Naive thymus-derived CD4-positive, alpha-beta T cell (primary cell): ENCODE measurements at regions of chr6 and their contacts with region 1.

Region 1: DNA sequence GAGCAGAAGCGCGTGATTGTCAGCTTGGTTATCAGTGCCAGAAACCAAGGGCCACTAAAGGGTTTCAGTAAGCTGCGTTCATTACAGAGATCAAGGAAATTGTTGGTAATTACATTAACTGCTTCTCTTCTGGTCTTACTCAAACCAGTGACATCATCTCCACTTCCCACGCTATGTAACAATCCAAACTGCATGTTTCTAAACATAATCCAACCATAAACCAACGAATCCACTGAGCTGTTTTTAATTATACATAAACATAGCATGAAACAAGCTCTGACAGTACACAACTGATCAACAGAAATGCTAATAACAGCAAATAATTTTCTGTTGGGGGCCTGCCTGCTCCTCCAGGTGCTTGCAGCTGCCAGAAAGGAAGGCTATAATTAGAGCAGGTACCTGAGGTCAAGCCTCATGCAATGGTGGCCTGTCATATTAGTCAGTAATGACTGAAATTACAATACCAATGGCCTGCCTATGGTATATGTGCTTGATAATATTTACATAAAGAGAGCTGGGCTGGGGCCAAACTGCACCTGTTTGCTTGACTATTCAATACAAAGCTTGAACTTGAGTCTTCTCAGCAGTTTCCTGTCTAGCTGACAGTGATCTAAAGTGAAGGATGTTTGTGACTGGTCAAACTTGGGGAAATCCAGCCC is 40.1 kb downstream of the ILRUN start:
- DNase-seq: peak in 2 of 9 donors; percentile 15 to 25
- ATAC-seq: peak; percentile 70
- H3K4me3 ChIP-seq: peak overlapping the region; percentile 55
- H3K4me3 Mint-ChIP-seq: peak overlapping the region; percentile 68 to 94 (median 86)
- H3K27ac ChIP-seq: peak overlapping the region; percentile 72
- H3K27ac Mint-ChIP-seq: peak overlapping the region; percentile 84 to 97 (median 93)
- H3K4me1 ChIP-seq: peaks cover 8 to 17% of the 10 kb centered on the region in 2 donors
- H3K4me1 Mint-ChIP-seq: peaks cover 26 to 59% (median 55%) of the 10 kb centered on the region in 7 donors
- H3K27me3 ChIP-seq: no peaks in the 10 kb centered on the region
- H3K27me3 Mint-ChIP-seq: no peaks in the 10 kb centered on the region

Region 2: DNA sequence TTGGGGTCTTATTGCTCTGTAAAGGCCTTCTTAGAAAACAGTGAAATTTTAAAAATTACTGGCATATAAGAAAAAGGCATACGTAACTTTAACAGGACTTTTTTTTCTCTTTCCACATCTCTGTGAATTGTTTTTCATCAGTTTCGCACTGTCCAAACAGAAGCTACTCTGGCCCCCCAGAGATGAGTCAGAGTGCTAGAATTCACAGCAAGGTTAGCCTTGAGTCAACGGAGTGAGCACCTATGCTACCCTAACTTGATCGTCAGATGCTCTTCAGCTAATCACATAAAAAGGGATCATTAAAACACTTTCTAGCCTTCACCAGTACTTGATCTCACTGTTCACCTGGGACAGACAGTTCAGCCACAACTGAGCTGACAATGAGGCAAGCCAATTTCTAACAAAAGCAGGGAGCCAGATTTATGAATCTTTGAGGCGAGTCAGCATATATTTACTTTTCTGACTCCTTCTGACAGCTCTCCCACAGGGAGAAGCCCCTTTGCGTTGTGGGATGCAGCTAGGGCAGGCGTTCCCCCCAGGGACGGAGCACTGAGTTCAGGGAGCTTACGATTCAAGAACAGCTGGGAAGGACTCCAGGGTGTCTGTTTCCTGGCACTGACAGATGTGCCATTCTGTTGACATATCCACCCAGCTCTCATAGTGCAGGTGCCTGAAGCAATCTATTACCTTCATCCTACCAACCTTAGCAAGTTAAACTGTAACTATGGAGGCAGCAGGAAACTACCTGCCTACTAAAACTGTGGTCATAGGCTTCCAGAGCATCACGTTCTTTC is 54.0 kb before region 1 on chr6:
- CTCF ChIA-PET with region 1: no interaction called
- POLR2A ChIA-PET with region 1: no interaction called
- intact Hi-C with region 1: no loop called
- DNase-seq: no peak
- ATAC-seq: no peak
- H3K4me3 ChIP-seq: no peak overlapping the region
- H3K4me3 Mint-ChIP-seq: no peak overlapping the region
- H3K27ac ChIP-seq: no peak overlapping the region
- H3K27ac Mint-ChIP-seq: no peak overlapping the region
- H3K4me1 ChIP-seq: no peaks in the 10 kb centered on the region
- H3K4me1 Mint-ChIP-seq: peaks cover 0 to 48% (median 28%) of the 10 kb centered on the region in 7 donors
- H3K27me3 ChIP-seq: no peaks in the 10 kb centered on the region
- H3K27me3 Mint-ChIP-seq: no peaks in the 10 kb centered on the region

Region 3: DNA sequence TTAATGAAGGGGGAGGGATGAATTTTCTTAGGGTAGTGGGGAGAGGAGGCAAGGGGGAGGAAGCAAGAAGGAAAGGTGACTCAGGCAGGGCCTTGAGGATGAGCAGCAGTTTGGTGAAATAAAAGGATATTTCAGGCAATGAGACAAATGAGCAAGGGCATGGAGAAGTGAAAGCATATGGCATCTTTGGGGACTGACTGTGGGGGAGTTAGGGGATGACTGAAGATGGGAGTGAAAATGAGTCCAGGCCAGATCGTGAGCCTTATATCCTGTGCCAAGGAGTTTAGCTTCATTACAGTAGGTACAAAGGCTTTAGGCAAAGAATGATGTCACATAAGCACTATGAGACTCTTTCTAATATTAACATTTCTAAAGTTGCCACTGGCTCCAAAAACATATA is 11.8 kb before region 1 on chr6:
- CTCF ChIA-PET with region 1: no interaction called
- POLR2A ChIA-PET with region 1: no interaction called
- intact Hi-C with region 1: loop called in 1 of 2 experiments (anchors 2 kb)
- DNase-seq: no peak
- ATAC-seq: no peak
- H3K4me3 ChIP-seq: no peak overlapping the region
- H3K4me3 Mint-ChIP-seq: no peak overlapping the region
- H3K27ac ChIP-seq: no peak overlapping the region
- H3K27ac Mint-ChIP-seq: peak overlapping the region in 2 of 9 donors; percentile 4 to 53
- H3K4me1 ChIP-seq: no peaks in the 10 kb centered on the region
- H3K4me1 Mint-ChIP-seq: peaks cover 9 to 41% (median 18%) of the 10 kb centered on the region in 7 donors
- H3K27me3 ChIP-seq: no peaks in the 10 kb centered on the region
- H3K27me3 Mint-ChIP-seq: no peaks in the 10 kb centered on the region

Region 4: GRCh38 chr6:34671801-34672656 is 15.5 kb after region 1 on chr6:
- CTCF ChIA-PET with region 1: interaction called, 3 read pairs
- POLR2A ChIA-PET with region 1: interaction called, 49 read pairs
- intact Hi-C with region 1: loop called (anchors 1 kb)
- DNase-seq: peak; percentile 27 to 83 (median 71)
- ATAC-seq: peak; percentile 99
- H3K4me3 ChIP-seq: peak overlapping the region; percentile 37
- H3K4me3 Mint-ChIP-seq: peak overlapping the region; percentile 72 to 88 (median 81)
- H3K27ac ChIP-seq: peak overlapping the region; percentile 75
- H3K27ac Mint-ChIP-seq: peak overlapping the region; percentile 92 to 97 (median 96)
- H3K4me1 ChIP-seq: peaks cover 35 to 48% of the 10 kb centered on the region in 2 donors
- H3K4me1 Mint-ChIP-seq: peaks cover 61 to 84% (median 74%) of the 10 kb centered on the region in 7 donors
- H3K27me3 ChIP-seq: no peaks in the 10 kb centered on the region
- H3K27me3 Mint-ChIP-seq: no peaks in the 10 kb centered on the region